SK-N-SH (cell line): ENCODE measurements at regions of chr15 and their contacts with region 1.

Region 1: DNA sequence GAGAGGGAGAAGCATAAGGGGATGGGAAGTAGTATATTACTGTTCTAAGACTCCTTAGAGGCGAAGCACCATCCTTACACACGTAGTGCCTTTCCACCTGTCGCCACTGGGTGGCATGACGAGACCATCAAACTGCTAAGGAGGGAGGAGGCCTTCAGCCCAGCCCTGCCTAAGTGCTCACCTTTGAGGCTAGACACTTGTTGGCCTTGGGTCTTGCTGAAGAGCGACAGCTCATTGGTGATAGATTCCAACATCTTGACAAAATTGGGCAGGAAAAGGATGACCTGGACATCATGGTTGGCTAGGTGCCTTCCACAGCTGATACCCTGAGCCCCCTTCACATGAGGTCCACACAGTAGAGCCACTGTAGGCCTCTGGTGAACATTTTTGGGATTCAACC is 19.6 kb downstream of the CLK3 start:
- DNase-seq: peak; percentile 74
- H3K4me3 ChIP-seq: no peak overlapping the region
- H3K27ac ChIP-seq: no peak overlapping the region
- H3K4me1 ChIP-seq: no peaks in the 10 kb centered on the region
- H3K27me3 ChIP-seq: no peaks in the 10 kb centered on the region
- CTCF ChIP-seq: peak; percentile 92
- EP300 ChIP-seq: no peak
- RAD21 ChIP-seq: peak; percentile 94

Region 2: DNA sequence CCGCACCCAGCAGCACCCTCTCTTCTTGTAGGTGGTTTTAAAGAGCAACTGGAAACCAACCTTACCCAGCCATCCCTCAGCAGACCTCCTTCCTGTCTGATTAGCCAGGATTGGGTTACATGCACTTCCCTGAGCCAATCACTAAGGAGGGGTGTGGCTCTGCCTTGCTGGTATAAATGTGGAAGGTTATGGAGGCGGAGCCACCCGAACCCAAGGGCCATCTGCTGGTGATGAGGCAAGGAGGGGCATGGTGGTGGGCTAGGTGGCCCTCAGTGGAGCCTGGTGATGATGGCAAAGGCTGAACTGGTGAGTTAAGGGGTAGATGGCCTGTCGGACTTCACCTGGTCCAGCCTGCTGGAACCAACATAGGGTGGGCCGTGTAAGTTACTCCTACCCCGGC is 359.3 kb before region 1 on chr15:
- CTCF ChIA-PET with region 1: no interaction called
- POLR2A ChIA-PET with region 1: no interaction called
- DNase-seq: peak; percentile 51
- H3K4me3 ChIP-seq: no peak overlapping the region
- H3K27ac ChIP-seq: no peak overlapping the region
- H3K4me1 ChIP-seq: peaks cover 0 to 43% of the 10 kb centered on the region in 2 experiments; a peak in 1 of 4 replicates
- H3K27me3 ChIP-seq: no peaks in the 10 kb centered on the region; the same call in 1 of the 2 replicates
- CTCF ChIP-seq: no peak
- EP300 ChIP-seq: no peak
- RAD21 ChIP-seq: no peak

Region 3: DNA sequence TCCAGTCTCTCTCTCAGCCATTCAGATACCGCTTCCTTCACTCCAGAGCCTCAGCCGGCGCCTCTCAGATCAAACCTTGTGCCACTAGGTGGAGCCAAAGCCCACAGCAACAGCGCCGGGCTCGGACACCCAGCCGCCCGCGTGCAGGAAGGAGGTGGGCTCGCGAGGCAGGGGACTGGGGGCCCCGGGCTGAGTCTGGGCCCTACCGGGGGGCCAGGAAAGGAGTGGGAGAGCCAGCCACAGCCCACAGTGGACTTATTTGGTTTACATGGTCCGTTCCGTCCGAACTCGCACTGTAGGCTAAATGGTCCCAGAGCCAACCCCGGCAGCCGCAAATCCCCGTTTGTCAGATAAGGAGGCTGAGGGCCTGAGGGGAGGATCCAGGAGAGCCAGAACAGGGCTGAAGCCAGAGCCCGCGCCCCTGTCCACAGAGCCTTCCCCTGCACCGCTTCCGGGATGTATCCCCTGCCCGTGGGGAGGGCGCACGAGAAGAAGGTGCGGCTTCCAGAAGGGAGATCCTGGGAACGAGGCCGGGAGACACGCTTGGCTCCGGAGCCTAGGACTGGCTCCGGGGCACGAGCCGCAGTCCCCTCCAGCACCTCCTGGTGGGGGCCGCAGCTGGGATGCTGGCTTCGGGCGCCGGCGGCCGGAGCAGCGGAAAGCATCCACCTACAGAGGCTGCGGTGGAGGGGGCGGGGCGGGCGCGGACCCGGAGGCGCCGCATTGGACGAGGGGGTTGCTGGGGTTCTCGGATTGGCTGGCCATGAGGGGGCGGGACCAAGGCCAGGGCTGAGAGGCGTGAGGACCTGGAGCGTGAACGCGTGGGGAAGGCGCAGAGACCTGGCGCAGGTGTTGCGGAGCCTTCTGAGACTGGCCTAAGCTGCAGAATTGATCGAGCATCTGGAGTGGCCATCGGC is 261.2 kb before region 1 on chr15:
- CTCF ChIA-PET with region 1: interaction called, 66 read pairs
- POLR2A ChIA-PET with region 1: no interaction called
- DNase-seq: peak; percentile 99
- H3K4me3 ChIP-seq: peak overlapping the region; percentile 67 to 99
- H3K27ac ChIP-seq: peak overlapping the region in 1 of 2 experiments; percentile 93; a peak in 2 of 4 replicates
- H3K4me1 ChIP-seq: peaks cover 0 to 12% of the 10 kb centered on the region in 2 experiments; a peak in 1 of 4 replicates
- H3K27me3 ChIP-seq: peaks cover 30% of the 10 kb centered on the region
- CTCF ChIP-seq: peak; percentile 90
- EP300 ChIP-seq: no peak; a peak in 1 of 4 replicates
- RAD21 ChIP-seq: peak; percentile 93

Region 4: DNA sequence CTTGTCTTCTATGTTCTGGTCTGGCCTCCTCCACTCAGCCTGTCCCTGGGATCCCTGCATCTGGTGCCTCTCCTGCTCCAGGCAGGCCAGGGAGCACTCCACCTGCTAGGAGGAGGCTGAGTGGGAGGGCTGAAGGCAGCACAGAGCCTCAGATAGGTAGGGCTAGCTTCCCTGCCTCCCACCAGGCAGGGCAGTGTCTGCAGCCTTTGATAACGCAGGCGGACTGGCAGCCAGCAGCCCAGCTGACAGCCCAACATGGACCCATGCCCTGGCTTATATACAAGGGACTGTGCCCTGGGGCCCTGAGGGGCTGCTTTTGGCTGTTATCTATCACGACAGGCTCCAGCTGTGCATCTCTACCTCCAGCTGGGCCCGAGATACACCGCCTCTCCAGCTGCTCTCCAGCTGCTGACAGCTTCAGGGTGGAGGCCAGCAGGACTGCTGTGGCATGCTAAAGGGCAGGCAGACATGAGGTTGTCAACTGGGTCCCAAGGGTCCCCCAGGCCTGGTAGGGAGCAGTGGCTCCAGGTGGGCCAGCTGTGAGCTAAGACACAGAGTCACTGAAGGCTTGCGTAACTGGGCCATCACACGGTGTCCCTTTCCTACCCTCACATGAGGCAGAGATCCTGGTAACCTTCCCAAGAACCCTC is 24.8 kb before region 1 on chr15:
- CTCF ChIA-PET with region 1: interaction called, 245 read pairs
- POLR2A ChIA-PET with region 1: interaction called, 5 read pairs
- DNase-seq: peak; percentile 85
- H3K4me3 ChIP-seq: no peak overlapping the region
- H3K27ac ChIP-seq: peak overlapping the region in 1 of 2 experiments; percentile 84; a peak in 2 of 4 replicates
- H3K4me1 ChIP-seq: peaks cover 0 to 33% of the 10 kb centered on the region in 2 experiments; a peak in 2 of 4 replicates
- H3K27me3 ChIP-seq: no peaks in the 10 kb centered on the region
- CTCF ChIP-seq: no peak
- EP300 ChIP-seq: peak in 1 of 2 experiments; percentile 72; a peak in 2 of 4 replicates
- RAD21 ChIP-seq: 0 out of 2 replicates have a peak, but pooled peaks have one; percentile 5

Region 5: GRCh38 chr15:74653426-74654123 is 18.3 kb after region 1 on chr15:
- CTCF ChIA-PET with region 1: interaction called, 141 read pairs
- POLR2A ChIA-PET with region 1: no interaction called
- DNase-seq: peak; percentile 52
- H3K4me3 ChIP-seq: no peak overlapping the region
- H3K27ac ChIP-seq: peak overlapping the region; percentile 38 to 43; a peak in 2 of 4 replicates
- H3K4me1 ChIP-seq: peaks cover 0 to 30% of the 10 kb centered on the region in 2 experiments; a peak in 3 of 4 replicates
- H3K27me3 ChIP-seq: no peaks in the 10 kb centered on the region
- CTCF ChIP-seq: no peak
- EP300 ChIP-seq: peak; percentile 37 to 44; a peak in 2 of 4 replicates
- RAD21 ChIP-seq: no peak

Region 6: DNA sequence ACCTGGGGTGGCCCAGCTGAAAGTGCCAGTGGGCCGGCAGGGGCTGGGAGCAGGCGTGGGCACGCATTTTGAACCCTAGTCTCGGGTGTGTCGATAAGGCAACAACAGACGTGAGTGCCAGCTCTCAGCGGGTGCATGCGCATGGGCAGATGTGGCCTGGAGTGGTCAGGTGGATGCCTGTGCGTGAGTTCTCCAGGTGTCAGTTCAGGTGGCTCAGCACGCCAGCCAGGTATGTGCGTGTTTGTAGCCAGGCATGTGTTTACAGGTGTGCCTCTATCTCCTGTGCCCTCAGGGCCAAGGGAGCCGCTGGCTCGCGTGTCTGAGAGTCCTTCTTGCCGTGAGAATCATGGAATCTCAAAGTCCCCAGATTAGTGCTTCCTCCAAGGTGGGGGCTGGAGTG is 128.2 kb after region 1 on chr15:
- CTCF ChIA-PET with region 1: interaction called, 1,109 read pairs
- POLR2A ChIA-PET with region 1: interaction called, 15 read pairs
- DNase-seq: no peak
- H3K4me3 ChIP-seq: no peak overlapping the region
- H3K27ac ChIP-seq: no peak overlapping the region
- H3K4me1 ChIP-seq: no peaks in the 10 kb centered on the region
- H3K27me3 ChIP-seq: peaks cover 7% of the 10 kb centered on the region; the same call in 1 of the 2 replicates
- CTCF ChIP-seq: no peak
- EP300 ChIP-seq: no peak
- RAD21 ChIP-seq: no peak

Region 7: GRCh38 chr15:74799856-74800547 is 164.8 kb after region 1 on chr15:
- CTCF ChIA-PET with region 1: interaction called, 11 read pairs
- POLR2A ChIA-PET with region 1: no interaction called
- DNase-seq: peak; percentile 94
- H3K4me3 ChIP-seq: peak overlapping the region in 1 of 2 experiments; percentile 43; a peak in 1 of 4 replicates
- H3K27ac ChIP-seq: no peak overlapping the region
- H3K4me1 ChIP-seq: no peaks in the 10 kb centered on the region
- H3K27me3 ChIP-seq: no peaks in the 10 kb centered on the region
- CTCF ChIP-seq: peak; percentile 90
- EP300 ChIP-seq: no peak
- RAD21 ChIP-seq: peak; percentile 74